Common myeloid progenitor, CD34-positive (primary cell): ENCODE measurements at regions of chr16 and their contacts with region 1.

Region 1: DNA sequence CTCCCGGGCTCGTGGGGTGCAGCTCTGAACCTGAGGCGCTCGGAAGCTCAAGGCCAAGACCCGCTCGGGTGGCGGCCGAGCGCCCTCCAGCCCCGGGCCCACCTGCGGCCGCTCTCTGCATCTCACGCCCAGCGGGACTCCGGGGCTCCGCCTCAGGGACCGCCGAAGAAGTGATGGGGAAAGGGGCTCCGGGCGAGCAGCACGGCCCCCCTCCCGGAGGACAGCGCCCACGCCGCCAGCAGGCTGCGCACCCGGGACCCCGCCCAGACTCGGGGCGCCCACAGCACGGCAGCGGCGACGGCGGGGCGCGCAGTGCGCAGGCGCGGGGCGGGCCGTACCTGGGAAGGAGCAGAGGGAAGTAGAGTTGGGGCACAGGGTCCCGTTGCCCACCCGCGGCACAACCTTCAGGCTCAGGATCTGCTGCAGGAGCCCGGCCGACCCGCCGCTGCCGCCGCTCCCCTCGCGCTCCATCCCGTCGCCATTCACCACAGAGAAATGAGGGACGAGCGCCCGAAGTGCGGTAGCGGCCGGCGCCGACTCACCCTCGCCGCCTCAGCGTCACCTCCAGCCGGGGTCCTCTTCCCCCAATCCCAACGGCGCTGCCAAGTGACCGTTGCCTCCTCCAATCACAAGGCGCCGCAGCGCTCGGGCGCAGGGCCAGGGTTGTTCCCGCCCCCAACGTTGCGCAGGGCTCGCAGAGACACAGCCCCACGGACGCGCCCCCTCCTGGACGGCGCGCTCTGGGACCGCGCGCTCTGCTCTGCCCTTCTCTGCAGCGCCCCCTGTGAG is at the start of gene TMEM170A:
- DNase-seq: peak; percentile 98 to 99 (median 99)
- H3K4me3 ChIP-seq: peak within 1 kb of the TSS; percentile 80 to 95 (median 85)
- H3K27ac ChIP-seq: peak within 1 kb of the TSS; percentile 74 to 90
- H3K4me1 ChIP-seq: peaks cover 4 to 13% (median 9%) of the 10 kb centered on the region in 4 experiments
- H3K27me3 ChIP-seq: no peaks in the 10 kb centered on the region

Region 2: DNA sequence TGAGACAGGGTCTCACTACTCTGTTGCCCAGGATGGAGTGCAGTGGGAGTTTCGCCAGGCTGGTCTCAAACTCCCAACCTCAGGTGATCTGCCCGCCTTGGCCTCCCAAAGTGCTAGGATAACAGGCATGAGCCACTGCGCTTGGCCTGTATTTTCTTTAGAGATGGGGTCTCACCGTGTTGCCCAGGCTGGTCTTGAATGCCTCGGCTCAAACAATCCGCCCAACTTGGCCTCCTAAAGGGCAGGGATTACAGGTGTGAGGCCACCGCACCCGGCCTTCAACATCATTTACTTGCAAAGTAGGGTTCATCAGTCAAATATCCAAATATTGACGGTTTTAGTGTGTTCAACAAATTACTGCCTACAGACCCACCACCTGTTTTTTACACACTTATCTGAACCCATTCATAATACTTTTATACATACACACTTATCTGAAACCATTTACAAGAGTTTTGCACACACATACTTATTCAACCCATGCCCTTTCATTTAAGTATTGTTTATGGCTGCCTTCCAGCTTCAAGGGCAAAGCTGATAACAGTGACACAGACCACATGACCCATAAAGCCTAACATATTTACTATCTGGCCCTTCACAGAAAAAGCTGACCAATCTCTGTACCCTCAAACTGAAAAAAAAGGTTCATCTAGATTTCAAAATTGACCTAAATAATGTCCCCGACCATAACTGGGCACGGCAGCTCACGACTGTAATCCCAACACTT is 11.7 kb before region 1 on chr16:
- CTCF ChIA-PET with region 1: interaction called, 10 read pairs
- POLR2A ChIA-PET with region 1: interaction called, 4 read pairs
- DNase-seq: peak in 1 of 3 donors; percentile 13
- H3K4me3 ChIP-seq: no peak overlapping the region
- H3K27ac ChIP-seq: no peak overlapping the region
- H3K4me1 ChIP-seq: peaks cover 0 to 2% (median 0%) of the 10 kb centered on the region in 4 experiments
- H3K27me3 ChIP-seq: no peaks in the 10 kb centered on the region

Region 3: DNA sequence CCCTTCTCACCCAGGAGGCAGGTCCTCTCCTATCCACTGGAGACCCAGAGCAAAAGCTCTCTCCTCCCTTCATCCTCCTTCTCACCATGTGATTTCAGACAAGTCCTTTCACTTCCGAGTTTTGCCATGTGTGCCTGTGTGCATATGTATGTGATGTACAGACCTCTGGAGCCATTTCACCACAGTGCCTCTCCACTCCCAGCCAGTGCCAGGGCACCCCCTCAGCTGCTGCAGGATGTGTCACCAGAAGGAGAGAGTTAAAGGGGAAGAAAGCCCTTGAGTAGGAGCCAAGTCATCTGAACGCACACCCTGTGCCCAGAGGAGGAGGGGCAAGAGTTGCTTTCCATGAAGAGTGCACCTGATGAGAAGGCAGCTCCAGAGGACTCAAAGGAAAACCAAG is 13.8 kb after region 1 on chr16:
- CTCF ChIA-PET with region 1: interaction called, 11 read pairs
- POLR2A ChIA-PET with region 1: no interaction called
- DNase-seq: peak; percentile 32 to 89 (median 68)
- H3K4me3 ChIP-seq: no peak overlapping the region
- H3K27ac ChIP-seq: no peak overlapping the region
- H3K4me1 ChIP-seq: no peaks in the 10 kb centered on the region
- H3K27me3 ChIP-seq: peaks cover 0 to 5% (median 0%) of the 10 kb centered on the region in 5 experiments